ENCODE measurements at regions of chr14 and their contacts with region 1.

Region 1: DNA sequence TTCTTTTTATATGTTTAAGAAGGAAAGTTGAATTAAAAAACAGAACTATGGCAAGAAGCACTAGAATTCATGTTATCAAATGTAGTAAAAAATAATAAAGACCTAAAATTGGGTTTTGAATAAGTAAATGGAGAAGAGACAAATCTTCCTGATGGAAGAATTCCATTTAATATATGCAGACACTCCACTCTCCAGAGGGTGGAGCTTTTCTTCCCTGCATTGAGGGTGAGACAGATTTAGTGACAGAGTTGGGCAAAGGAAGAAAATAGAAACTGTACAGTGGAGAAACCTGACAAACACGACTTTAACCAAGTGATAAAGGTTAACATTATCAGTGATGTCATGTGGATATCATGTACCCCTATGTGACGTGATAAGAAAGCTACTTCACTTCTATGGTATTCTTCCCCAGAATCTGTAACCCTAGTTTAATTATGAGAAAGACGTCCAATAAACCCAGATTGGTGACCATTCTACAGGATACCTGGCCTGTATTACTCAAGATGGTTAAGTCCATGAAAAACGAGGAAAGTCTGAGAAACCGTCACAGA is 217.6 kb downstream of the PRKD1 start:
- DNase-seq: no peak
- ATAC-seq: no peak
- H3K4me3 ChIP-seq: no peak overlapping the region
- H3K27ac ChIP-seq: no peak overlapping the region
- H3K4me1 ChIP-seq: no peaks in the 10 kb centered on the region
- H3K27me3 ChIP-seq: no peaks in the 10 kb centered on the region

Region 2: DNA sequence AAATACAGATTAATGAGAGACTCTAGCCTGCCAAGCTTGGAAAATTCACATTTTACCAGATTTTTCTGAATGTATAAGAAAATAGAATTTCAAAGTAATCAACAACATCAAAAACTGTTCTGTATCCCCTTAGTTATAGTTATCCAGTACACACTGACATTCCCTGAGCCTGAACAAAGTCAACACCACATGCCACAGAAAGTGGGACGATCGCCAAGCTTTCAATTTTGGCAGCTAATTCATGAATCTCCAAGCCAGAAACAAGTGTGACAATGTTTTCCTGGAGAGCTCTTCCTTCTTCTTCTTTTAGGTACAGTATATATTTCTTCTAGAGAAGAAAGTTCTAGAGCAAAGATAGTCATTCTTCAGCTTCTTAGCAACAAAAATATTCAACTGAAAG is 72.7 kb before region 1 on chr14:
- intact Hi-C with region 1: no loop called
- DNase-seq: peak; percentile 53 to 70 (median 61)
- ATAC-seq: peak; percentile 59 to 86
- H3K4me3 ChIP-seq: no peak overlapping the region
- H3K27ac ChIP-seq: no peak overlapping the region
- H3K4me1 ChIP-seq: peaks cover 2% of the 10 kb centered on the region
- H3K27me3 ChIP-seq: no peaks in the 10 kb centered on the region

Region 3: DNA sequence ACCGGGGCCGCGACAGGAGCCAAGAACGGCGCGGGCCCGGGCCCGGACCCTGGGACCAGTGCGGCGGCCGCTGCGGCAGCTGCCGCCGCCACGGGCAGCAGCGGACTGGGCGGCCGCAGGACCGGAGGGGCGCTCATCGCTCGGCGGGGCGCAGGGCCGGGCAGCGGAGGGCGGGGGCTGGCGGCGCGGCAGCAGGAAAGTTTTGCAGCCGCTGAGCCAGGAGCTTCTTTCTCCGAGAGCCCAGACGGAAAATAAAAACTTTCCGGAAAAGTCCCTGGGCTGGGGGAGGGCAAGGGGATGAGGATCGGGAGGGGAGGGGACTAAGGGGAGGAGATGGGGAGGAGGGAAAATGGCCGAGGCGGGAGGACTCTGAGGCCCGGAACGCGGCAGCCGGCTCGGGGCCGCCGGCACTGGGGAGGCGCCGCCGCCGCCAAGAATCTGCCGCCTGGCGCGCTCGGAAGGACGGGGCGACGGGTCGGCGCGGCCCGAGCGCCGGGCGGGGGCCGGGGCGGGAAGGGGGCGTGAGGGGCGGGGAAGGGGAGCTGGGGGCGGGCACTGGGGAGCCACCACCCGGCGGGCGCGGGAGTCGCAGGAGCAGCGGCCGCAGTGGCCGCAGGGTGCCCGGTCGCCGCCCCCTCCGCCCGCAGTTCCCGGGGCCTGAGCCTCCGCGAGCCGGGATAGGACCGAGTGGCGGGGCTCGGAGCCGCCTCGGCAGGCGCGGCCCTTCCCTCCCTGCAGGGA is 217.5 kb after region 1 on chr14 and contains the start of gene PRKD1:
- intact Hi-C with region 1: loop called in 1 of 4 experiments (anchors 10 kb)
- DNase-seq: peak; percentile 76 to 89 (median 87)
- ATAC-seq: peak; percentile 93
- H3K4me3 ChIP-seq: peak within 1 kb of the TSS; percentile 96
- H3K27ac ChIP-seq: peak within 1 kb of the TSS; percentile 85
- H3K4me1 ChIP-seq: peaks cover 4% of the 10 kb centered on the region
- H3K27me3 ChIP-seq: no peaks in the 10 kb centered on the region
- total RNA-seq, gene PRKD1: 6.3 to 10.1 (median 8.0) TPM